Mammary epithelial cell (primary cell): ENCODE measurements at regions of chr10 and their contacts with region 1.

Region 1: GRCh38 chr10:36712695-36713094 is 412.7 kb upstream of the ANKRD30A start:
- DNase-seq: no peak
- H3K4me3 ChIP-seq: no peak overlapping the region
- H3K27ac ChIP-seq: no peak overlapping the region
- H3K4me1 ChIP-seq: no peaks in the 10 kb centered on the region
- H3K27me3 ChIP-seq: no peaks in the 10 kb centered on the region
- CTCF ChIP-seq: no peak

Region 2: DNA sequence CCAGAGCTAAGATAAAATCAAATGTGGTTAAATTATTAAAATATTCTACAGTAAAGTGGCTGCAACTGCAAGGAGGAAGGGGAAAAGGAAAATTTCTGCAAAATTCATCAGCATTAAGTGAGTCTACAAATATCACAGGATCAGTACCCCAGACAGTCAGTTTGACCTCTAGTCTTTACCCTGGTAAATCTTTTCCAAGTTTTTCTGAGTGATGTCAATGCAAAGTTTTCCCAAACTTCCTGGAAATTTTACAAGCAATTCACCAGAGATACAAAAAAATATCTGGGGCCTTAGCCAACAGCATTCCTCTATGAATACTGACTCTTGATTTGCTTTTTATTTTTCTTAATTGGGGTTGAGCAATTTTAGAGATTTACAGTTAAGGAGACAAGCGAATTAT is 531.3 kb before region 1 on chr10:
- CTCF ChIA-PET with region 1: interaction called, 11 read pairs
- dilution Hi-C with region 1: no loop called
- in situ Hi-C with region 1: no loop called
- intact Hi-C with region 1: no loop called
- DNase-seq: no peak
- H3K4me3 ChIP-seq: no peak overlapping the region
- H3K27ac ChIP-seq: no peak overlapping the region
- H3K4me1 ChIP-seq: no peaks in the 10 kb centered on the region
- H3K27me3 ChIP-seq: no peaks in the 10 kb centered on the region
- CTCF ChIP-seq: no peak